ENCODE measurements at regions of chr6 and their contacts with region 1.

Region 1: DNA sequence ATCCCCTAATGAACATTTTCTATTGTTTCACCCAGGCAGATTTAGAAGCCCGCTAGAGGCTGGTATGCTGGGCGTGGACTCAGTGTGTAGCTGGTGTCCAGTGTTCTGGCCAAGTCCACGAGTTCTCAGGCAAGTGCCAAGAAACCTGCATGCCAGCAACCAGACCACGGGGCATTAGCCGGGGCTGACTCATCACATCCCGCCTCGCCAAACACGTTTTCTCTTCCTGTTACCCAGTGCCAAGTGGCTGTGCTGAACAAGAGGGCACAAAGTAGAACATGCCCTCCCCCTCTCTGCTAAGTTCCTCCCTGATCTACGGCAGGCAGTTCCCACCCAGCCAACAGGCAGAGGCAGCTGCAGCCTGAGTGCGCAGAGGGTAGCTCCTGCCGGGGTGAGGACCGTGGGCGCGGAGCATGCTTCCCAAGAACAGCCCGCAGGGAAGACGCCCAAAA is 29.6 kb downstream of the RAMACL start:
- DNase-seq: peak; percentile 100
- H3K4me3 ChIP-seq: no peak overlapping the region
- H3K27ac ChIP-seq: peak overlapping the region; percentile 92
- H3K4me1 ChIP-seq: peaks cover 27% of the 10 kb centered on the region
- H3K27me3 ChIP-seq: no peaks in the 10 kb centered on the region
- CTCF ChIP-seq: no peak
- POLR2A ChIP-seq: no peak

Region 2: GRCh38 chr6:166488076-166488685 is 68.7 kb before region 1 on chr6:
- CTCF ChIA-PET with region 1: no interaction called
- POLR2A ChIA-PET with region 1: interaction called, 3 read pairs
- dilution Hi-C with region 1: no loop called
- intact Hi-C with region 1: loop called (anchors 1 kb)
- DNase-seq: peak; percentile 99
- H3K4me3 ChIP-seq: no peak overlapping the region
- H3K27ac ChIP-seq: peak overlapping the region; percentile 92
- H3K4me1 ChIP-seq: peaks cover 49% of the 10 kb centered on the region
- H3K27me3 ChIP-seq: no peaks in the 10 kb centered on the region
- CTCF ChIP-seq: no peak
- POLR2A ChIP-seq: peak; percentile 77

Region 3: DNA sequence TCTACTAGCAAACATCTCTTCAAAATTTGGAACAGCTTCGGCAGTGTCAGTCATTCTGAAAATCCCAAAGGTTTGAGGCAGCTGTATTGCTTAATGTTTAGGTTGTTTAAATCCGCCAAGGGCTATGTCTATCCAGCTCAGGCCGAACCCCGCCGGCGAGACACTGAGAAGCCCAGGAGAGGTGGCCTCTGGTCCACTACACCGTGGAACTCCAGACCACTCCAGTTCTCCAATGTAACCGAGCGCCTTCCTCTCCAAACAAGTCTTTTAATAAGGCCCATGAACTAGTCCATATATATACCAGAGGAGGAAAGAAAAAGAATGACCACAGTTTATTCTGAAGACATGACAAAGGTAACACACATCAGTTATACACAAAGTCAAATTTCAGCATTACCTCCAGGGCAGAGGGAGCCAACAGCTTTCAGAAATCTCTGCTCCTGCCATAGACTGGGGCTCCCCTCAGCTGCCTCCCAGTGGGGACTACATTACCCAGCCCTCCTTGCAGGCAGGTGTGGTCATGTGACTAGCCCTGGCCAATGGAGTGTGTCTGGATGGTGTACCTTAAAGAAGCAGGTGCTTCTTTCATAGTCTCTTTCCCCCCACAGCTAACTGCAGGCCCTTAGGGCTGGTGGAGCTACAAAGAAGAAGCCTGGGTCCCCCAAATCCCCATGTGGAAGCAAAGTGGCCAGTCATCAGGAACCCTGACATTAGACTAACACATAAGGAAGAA is 29.7 kb after region 1 on chr6 and contains the start of gene RAMACL:
- CTCF ChIA-PET with region 1: interaction called, 6 read pairs
- POLR2A ChIA-PET with region 1: no interaction called
- dilution Hi-C with region 1: no loop called
- intact Hi-C with region 1: loop called (anchors 2 kb)
- DNase-seq: no peak
- H3K4me3 ChIP-seq: no peak within 1 kb of the TSS
- H3K27ac ChIP-seq: no peak within 1 kb of the TSS
- H3K4me1 ChIP-seq: peaks cover 34% of the 10 kb centered on the region
- H3K27me3 ChIP-seq: no peaks in the 10 kb centered on the region
- CTCF ChIP-seq: no peak
- POLR2A ChIP-seq: no peak
- total RNA-seq, gene RAMACL: 4.0 and 5.3 TPM in 2 replicates

Region 4: DNA sequence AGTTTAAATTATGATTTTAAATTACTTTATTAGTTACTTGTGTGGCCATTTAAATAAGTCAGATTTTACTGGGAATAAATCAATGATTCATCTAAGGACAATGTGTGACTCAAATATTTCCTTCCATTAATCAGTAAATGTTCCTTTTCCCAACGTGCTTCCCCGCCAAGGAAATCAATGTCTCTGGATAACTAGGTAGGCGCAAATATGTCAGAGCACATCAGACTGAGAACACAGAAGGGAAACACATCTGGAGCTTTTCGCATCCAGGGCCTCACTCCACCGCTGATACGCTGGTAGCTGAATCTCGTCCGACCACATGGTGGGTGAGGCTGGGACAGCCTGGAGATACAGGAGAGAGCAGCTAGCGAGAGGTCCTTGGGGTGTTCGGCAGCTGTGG is 126.6 kb after region 1 on chr6:
- CTCF ChIA-PET with region 1: no interaction called
- POLR2A ChIA-PET with region 1: no interaction called
- dilution Hi-C with region 1: no loop called
- intact Hi-C with region 1: loop called (anchors 2 kb)
- DNase-seq: peak; percentile 75
- H3K4me3 ChIP-seq: no peak overlapping the region
- H3K27ac ChIP-seq: peak overlapping the region; percentile 66
- H3K4me1 ChIP-seq: peaks cover 14% of the 10 kb centered on the region
- H3K27me3 ChIP-seq: no peaks in the 10 kb centered on the region
- CTCF ChIP-seq: no peak
- POLR2A ChIP-seq: no peak

Region 5: GRCh38 chr6:166736634-166737033 is 179.7 kb after region 1 on chr6:
- CTCF ChIA-PET with region 1: no interaction called
- POLR2A ChIA-PET with region 1: no interaction called
- dilution Hi-C with region 1: no loop called
- intact Hi-C with region 1: loop called (anchors 1 kb)
- DNase-seq: peak; percentile 89
- H3K4me3 ChIP-seq: no peak overlapping the region
- H3K27ac ChIP-seq: peak overlapping the region; percentile 66
- H3K4me1 ChIP-seq: peaks cover 10% of the 10 kb centered on the region
- H3K27me3 ChIP-seq: no peaks in the 10 kb centered on the region
- CTCF ChIP-seq: no peak
- POLR2A ChIP-seq: no peak